Naive thymus-derived CD8-positive, alpha-beta T cell (primary cell): ENCODE measurements at regions of chr16 and their contacts with region 1.

Region 1: DNA sequence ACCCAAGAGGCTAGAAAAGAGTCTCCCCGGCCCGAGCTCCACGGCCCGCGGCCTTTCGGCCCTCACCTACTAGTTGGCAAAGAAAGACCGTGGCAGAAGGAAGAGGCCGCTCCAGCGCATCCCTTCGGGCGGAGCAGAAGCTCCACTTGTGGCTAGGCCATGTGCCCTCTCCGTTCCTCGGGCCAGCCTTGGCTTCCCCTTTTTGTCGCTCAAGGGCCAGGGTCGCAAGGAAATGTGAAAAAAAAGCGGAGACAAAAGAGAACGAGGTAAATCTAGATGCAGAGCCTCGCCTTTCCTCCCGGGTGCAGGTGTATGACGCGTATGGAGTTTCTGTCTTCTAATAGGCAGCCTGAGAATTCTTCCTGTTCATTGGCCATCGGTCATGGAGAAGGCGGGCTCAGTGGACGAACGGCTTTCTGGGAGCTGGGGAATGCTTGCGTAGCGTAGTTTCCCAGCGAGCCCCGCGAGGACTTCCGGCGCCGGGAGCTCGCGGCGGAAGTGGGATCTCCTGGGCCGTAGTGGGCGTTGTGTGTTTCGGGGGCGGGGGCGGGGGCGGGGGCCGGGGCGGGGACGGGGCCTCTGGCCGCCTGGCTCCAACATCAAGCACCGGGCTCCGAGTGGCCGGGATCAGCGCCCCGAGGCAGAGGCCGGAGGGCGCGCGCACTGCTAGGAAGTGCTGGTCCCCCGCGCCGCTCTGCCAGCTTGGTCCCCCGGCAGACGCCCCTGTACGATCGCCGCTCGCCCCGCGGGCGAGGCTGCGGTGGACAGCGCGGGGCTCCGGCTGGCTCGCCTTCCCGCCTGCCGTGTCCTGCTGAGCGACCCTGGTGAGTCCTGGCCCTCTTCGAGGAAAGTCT is at the start of gene ZNF213:
- DNase-seq: peak; percentile 80 to 98 (median 93)
- ATAC-seq: peak; percentile 97 to 98
- H3K4me3 Mint-ChIP-seq: peak within 1 kb of the TSS; percentile 89 to 99 (median 98)
- H3K27ac Mint-ChIP-seq: peak within 1 kb of the TSS; percentile 93 to 100 (median 99)
- H3K4me1 Mint-ChIP-seq: peaks cover 8 to 39% (median 34%) of the 10 kb centered on the region in 4 donors
- H3K27me3 Mint-ChIP-seq: no peaks in the 10 kb centered on the region
- polyA plus RNA-seq, gene ZNF213: 0.27 to 2.5 (median 0.90) TPM

Region 2: GRCh38 chr16:3023669-3024478 is 110.9 kb before region 1 on chr16 and contains the starts of genes HCFC1R1 and THOC6:
- POLR2A ChIA-PET with region 1: interaction called, 30 read pairs
- DNase-seq: peak; percentile 88 to 97 (median 94)
- ATAC-seq: peak; percentile 75 to 87
- H3K4me3 Mint-ChIP-seq: peak within 1 kb of the TSS; percentile 76 to 97 (median 92)
- H3K27ac Mint-ChIP-seq: peak within 1 kb of the TSS; percentile 81 to 99 (median 97)
- H3K4me1 Mint-ChIP-seq: peaks cover 25 to 63% (median 61%) of the 10 kb centered on the region in 4 donors
- H3K27me3 Mint-ChIP-seq: peaks cover 0 to 5% (median 2%) of the 10 kb centered on the region in 5 donors
- polyA plus RNA-seq, gene HCFC1R1: 13.1 to 16.5 (median 16.5) TPM
- polyA plus RNA-seq, gene THOC6: 45.2 to 59.0 (median 58.8) TPM

Region 3: DNA sequence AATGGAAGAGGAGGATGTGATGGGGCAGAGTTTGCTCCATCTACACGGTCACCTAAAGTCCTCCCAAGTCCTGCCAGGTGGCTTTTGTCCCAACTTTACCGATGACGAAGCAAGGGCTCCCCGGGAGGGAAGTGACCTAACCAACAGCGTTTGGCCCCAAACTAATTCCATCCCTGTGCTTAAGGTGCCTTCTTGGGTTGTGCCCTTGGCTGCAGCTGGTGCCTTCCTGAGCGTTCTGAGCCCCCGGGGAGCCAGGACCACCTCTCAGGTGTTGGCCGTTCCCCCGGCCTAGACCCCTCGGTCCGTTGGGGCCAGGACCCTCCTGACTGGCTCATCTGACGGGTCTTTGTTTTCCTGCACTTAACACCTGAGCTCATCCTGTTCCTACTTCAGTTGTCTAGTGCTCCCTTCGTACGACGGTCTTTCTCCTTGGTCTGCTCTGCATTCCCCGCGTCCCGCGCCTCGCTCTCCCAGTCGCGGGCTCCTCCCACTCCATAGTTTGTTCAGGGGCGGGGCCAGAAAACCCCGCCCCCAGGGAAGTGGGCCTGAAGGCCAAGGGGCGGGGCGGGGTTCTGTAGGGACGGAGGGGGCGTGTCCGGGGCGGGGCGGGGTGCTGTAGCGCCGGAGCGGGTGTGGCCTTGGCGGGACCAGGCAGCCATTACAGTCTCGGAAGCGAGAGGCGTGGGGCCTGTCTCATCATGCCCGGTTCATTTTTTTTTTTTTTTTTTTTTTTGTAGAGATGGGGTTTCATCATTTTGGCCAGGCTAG is 34.9 kb before region 1 on chr16:
- POLR2A ChIA-PET with region 1: interaction called, 34 read pairs
- DNase-seq: peak; percentile 68 to 93 (median 78)
- ATAC-seq: peak; percentile 78 to 86
- H3K4me3 Mint-ChIP-seq: peak overlapping the region; percentile 70 to 87 (median 78)
- H3K27ac Mint-ChIP-seq: peak overlapping the region in 9 of 10 donors; percentile 46 to 90 (median 79)
- H3K4me1 Mint-ChIP-seq: peaks cover 24 to 60% (median 58%) of the 10 kb centered on the region in 4 donors
- H3K27me3 Mint-ChIP-seq: no peaks in the 10 kb centered on the region

Region 4: GRCh38 chr16:3123986-3124886 is 10.6 kb before region 1 on chr16:
- POLR2A ChIA-PET with region 1: interaction called, 23 read pairs
- DNase-seq: peak; percentile 94 to 99 (median 97)
- ATAC-seq: peak; percentile 87 to 88
- H3K4me3 Mint-ChIP-seq: peak overlapping the region; percentile 94 to 98 (median 96)
- H3K27ac Mint-ChIP-seq: peak overlapping the region; percentile 91 to 99 (median 97)
- H3K4me1 Mint-ChIP-seq: peaks cover 20 to 55% (median 43%) of the 10 kb centered on the region in 4 donors
- H3K27me3 Mint-ChIP-seq: no peaks in the 10 kb centered on the region

Region 5: GRCh38 chr16:3150346-3151218 is 15.8 kb after region 1 on chr16:
- POLR2A ChIA-PET with region 1: interaction called, 171 read pairs
- DNase-seq: peak; percentile 91 to 100 (median 97)
- ATAC-seq: peak; percentile 82 to 83
- H3K4me3 Mint-ChIP-seq: peak overlapping the region; percentile 87 to 94 (median 90)
- H3K27ac Mint-ChIP-seq: peak overlapping the region; percentile 80 to 99 (median 90)
- H3K4me1 Mint-ChIP-seq: peaks cover 19 to 34% (median 29%) of the 10 kb centered on the region in 4 donors
- H3K27me3 Mint-ChIP-seq: peaks cover 0 to 7% (median 0%) of the 10 kb centered on the region in 5 donors

Region 6: DNA sequence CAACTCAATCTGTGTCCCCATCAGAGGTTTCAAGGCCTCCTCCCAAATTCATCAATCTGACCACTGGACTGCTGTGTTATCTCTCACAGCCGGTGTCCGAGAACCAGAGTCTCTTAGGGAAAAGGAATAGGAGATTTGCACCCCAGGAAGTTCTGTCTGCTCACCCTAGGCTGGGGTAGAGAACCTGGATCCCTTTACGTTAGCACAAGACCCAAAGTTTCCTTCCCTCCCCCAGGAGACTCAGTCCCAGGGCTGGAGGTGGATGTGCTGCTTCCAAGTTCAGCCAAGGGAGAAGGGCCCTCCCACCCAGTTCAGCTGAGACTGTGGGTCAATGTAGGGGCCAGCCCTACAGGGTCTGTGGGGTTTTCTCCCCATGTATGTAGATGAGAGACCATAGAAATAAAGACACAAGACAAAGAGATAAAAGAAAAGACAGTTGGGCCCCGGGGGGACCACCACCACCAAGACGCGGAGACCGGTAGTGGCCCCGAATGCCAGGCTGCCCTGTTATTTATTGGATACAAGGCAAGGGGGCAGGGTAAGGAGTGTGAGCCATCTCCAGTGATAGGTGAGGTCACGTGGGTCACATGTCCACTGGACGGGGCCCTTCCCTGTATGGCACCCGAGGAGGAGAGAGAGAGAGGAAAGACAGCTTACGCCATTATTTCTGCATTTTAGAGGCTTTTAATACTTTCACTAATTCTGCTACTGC is 30.5 kb after region 1 on chr16:
- POLR2A ChIA-PET with region 1: interaction called, 81 read pairs
- DNase-seq: peak in 1 of 10 donors; percentile 54
- ATAC-seq: no peak
- H3K4me3 Mint-ChIP-seq: peak overlapping the region; percentile 7 to 76 (median 61)
- H3K27ac Mint-ChIP-seq: peak overlapping the region; percentile 29 to 90 (median 77)
- H3K4me1 Mint-ChIP-seq: peaks cover 7 to 14% (median 10%) of the 10 kb centered on the region in 4 donors
- H3K27me3 Mint-ChIP-seq: peaks cover 0 to 2% (median 0%) of the 10 kb centered on the region in 5 donors

Region 7: DNA sequence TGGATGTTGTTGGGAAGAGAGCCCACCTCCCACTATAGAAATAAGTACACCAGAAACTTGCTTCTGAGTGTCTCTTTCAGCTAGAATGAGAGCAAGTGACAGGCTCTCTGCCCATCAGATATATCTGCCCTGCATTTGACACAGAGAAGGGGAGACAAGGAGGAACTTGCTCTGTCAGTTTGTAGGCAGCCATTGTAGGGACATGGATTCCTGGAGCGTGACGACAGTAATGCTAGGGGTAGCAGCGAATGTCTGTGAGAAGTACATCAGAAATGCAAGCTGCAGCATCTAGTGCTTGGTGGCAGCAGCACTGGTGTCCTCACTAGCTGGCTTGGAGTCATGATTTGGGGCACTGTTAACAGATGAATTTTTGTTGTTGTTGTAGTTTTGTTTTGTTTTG is 77.2 kb after region 1 on chr16:
- POLR2A ChIA-PET with region 1: no interaction called
- DNase-seq: no peak
- ATAC-seq: no peak
- H3K4me3 Mint-ChIP-seq: peak overlapping the region in 2 of 10 donors; percentile 30 to 56
- H3K27ac Mint-ChIP-seq: peak overlapping the region in 9 of 10 donors; percentile 22 to 93 (median 71)
- H3K4me1 Mint-ChIP-seq: peaks cover 22 to 39% (median 39%) of the 10 kb centered on the region in 4 donors
- H3K27me3 Mint-ChIP-seq: peaks cover 0 to 2% (median 0%) of the 10 kb centered on the region in 5 donors